ENCODE measurements at regions of chr6 and their contacts with region 1.

Region 1: GRCh38 chr6:35731736-35732532 is 4.9 kb upstream of the ARMC12 start:
- DNase-seq: peak; percentile 98
- ATAC-seq: peak; percentile 63
- H3K4me3 Mint-ChIP-seq: peak overlapping the region; percentile 85
- H3K27ac Mint-ChIP-seq: peak overlapping the region; percentile 99
- H3K4me1 Mint-ChIP-seq: peaks cover 77% of the 10 kb centered on the region
- H3K27me3 Mint-ChIP-seq: no peaks in the 10 kb centered on the region

Region 2: DNA sequence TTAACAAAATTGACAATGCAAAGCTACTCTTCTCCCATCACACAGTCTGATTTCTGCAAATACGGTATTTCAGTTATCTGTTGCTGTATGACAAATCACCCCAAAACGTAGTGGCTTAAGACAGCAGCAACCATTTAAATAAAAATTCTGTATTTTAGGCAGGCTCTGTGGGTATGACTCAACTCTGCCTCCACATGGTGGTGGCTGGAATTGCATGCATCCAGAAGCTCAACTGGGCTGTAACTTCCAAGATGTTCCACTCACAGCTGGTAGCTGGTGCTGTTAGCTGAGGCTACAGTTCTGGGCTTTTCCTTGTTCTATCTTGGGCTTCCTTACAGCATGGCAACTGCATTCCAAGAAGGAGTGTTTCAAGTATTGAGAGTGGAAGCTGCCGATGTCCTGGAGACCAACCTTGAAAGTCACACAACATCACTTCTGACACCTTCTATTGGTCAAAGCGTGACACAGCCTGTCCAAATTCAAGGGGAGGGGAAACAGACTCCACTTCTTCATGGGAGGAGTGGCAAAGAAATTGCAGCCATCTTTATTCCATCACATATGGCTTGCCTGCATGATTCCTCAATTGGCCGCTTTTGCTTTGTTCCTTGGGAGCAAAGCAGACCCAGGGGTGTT is 179.5 kb before region 1 on chr6:
- CTCF ChIA-PET with region 1: interaction called, 26 read pairs
- POLR2A ChIA-PET with region 1: no interaction called
- DNase-seq: peak; percentile 78
- ATAC-seq: peak; percentile 64
- H3K4me3 Mint-ChIP-seq: no peak overlapping the region
- H3K27ac Mint-ChIP-seq: no peak overlapping the region
- H3K4me1 Mint-ChIP-seq: peaks cover 8% of the 10 kb centered on the region
- H3K27me3 Mint-ChIP-seq: peaks cover 14% of the 10 kb centered on the region

Region 3: DNA sequence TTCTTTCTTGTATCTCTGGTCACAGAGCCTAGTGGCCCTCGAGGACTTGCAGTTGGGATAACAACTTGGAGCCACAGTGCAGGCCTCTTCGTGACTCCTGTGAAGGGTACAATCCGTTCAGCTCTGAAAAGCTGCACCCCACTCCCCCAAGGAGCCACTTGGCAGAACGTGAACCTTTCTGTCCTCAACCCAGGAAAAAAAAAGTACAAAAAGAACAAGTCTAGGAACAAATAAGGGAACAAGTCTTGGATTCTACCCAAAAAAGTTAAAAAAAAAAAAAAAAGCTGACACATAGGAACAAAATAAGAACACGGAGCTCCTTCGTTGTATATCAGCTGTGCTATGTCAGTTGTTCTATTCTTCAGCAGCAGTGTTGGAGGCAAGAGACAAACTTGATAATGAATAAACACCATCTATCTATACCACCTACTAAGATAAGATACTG is 141.3 kb before region 1 on chr6:
- CTCF ChIA-PET with region 1: interaction called, 259 read pairs
- POLR2A ChIA-PET with region 1: no interaction called
- DNase-seq: no peak
- ATAC-seq: no peak
- H3K4me3 Mint-ChIP-seq: no peak overlapping the region
- H3K27ac Mint-ChIP-seq: no peak overlapping the region
- H3K4me1 Mint-ChIP-seq: peaks cover 46% of the 10 kb centered on the region
- H3K27me3 Mint-ChIP-seq: no peaks in the 10 kb centered on the region

Region 4: GRCh38 chr6:35640017-35640664 is 91.8 kb before region 1 on chr6:
- CTCF ChIA-PET with region 1: interaction called, 49 read pairs
- POLR2A ChIA-PET with region 1: interaction called, 3 read pairs
- DNase-seq: no peak
- ATAC-seq: no peak
- H3K4me3 Mint-ChIP-seq: no peak overlapping the region
- H3K27ac Mint-ChIP-seq: no peak overlapping the region
- H3K4me1 Mint-ChIP-seq: peaks cover 48% of the 10 kb centered on the region
- H3K27me3 Mint-ChIP-seq: no peaks in the 10 kb centered on the region

Region 5: GRCh38 chr6:35663447-35664235 is 68.3 kb before region 1 on chr6:
- CTCF ChIA-PET with region 1: interaction called, 72 read pairs
- POLR2A ChIA-PET with region 1: interaction called, 10 read pairs
- DNase-seq: peak; percentile 37
- ATAC-seq: peak; percentile 61
- H3K4me3 Mint-ChIP-seq: no peak overlapping the region
- H3K27ac Mint-ChIP-seq: no peak overlapping the region
- H3K4me1 Mint-ChIP-seq: peaks cover 15% of the 10 kb centered on the region
- H3K27me3 Mint-ChIP-seq: no peaks in the 10 kb centered on the region

Region 6: DNA sequence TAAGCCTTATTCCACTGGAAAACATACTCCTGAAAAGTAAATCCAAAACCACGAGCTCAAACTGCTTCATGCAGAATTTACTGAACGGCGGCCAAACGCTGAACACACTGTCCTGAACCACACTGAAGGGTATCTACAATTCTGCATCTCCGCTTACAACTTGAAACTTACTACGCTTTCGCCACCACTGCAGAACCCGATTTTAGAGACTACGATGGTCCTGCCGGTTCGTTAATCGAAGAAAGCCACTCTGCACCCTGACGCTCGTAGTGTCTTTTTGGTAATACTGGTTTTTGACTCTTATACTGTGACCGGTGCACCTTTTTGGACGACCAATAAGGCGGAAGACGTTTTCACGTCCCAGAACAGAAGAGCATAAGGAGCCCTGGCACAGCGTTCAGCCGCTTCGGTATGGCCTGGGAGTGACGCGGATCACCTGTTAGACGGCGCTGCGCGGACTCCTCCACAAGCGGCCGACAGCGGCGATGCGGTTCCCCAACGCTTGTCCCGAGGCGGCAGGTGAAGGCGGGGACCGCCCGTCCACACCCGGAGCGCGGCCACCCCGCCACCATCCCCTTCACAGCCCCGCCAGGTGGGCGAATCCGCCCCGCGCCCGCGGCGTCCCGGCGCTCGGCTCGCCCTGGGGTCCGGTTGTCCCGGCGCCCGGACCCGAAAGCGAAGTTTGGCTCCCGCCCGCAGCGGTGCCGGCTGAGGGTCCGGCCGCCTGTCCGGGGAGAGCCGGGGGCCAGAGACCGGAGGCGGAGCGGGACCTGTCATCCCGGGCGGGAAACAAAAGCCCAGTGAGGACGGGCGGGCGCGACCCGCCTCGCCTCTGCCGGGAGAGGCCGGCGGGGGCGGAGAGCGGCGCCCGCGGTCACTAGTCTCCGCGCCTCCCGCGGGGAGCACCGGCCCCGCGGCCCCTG is 44.0 kb before region 1 on chr6:
- CTCF ChIA-PET with region 1: interaction called, 55 read pairs
- POLR2A ChIA-PET with region 1: interaction called, 8 read pairs
- DNase-seq: peak; percentile 74
- ATAC-seq: peak; percentile 54
- H3K4me3 Mint-ChIP-seq: peak overlapping the region; percentile 87
- H3K27ac Mint-ChIP-seq: peak overlapping the region; percentile 88
- H3K4me1 Mint-ChIP-seq: peaks cover 14% of the 10 kb centered on the region
- H3K27me3 Mint-ChIP-seq: no peaks in the 10 kb centered on the region

Region 7: DNA sequence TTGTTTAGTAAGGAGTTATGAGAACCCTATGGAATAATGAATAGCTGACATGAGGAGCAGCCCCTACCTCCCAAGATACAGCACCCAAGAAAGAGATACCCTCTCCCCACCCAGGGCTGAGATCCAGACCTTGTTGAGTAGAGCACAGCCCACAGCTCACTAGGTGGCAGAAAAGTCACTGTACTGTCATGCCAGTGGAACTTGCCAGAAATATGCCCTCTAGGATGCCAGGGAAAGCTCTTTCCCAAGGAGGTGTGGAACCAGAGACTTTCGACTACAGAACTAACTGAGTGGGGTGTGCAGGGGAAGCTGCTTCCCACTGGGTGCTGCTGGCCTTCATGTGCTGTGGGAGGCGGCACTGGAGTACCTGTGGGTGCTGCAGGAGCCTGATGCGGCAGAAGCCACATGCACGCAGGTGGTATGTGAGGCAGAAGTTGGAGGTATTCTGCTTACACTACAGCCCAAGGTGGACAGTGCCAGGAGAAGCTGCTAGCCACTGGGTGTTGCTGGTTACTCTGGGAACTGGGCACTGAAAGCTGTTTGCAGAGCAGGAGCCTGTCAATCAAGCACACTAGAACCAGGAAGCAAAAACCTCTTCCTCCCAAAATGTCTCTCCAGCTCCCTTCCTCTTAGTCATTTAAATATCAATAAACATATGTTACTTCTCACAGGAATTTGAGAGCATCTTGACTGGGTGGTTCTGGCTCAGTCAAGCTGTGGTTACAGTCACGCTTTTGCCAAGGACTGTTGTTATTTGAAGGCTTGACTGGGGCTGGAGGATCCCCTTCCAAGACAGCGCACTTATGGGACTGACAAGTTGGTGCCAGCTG is 22.7 kb after region 1 on chr6:
- CTCF ChIA-PET with region 1: interaction called, 10 read pairs
- POLR2A ChIA-PET with region 1: no interaction called
- DNase-seq: no peak
- ATAC-seq: no peak
- H3K4me3 Mint-ChIP-seq: no peak overlapping the region
- H3K27ac Mint-ChIP-seq: peak overlapping the region; percentile 36
- H3K4me1 Mint-ChIP-seq: peaks cover 12% of the 10 kb centered on the region
- H3K27me3 Mint-ChIP-seq: peaks cover 9% of the 10 kb centered on the region

Region 8: DNA sequence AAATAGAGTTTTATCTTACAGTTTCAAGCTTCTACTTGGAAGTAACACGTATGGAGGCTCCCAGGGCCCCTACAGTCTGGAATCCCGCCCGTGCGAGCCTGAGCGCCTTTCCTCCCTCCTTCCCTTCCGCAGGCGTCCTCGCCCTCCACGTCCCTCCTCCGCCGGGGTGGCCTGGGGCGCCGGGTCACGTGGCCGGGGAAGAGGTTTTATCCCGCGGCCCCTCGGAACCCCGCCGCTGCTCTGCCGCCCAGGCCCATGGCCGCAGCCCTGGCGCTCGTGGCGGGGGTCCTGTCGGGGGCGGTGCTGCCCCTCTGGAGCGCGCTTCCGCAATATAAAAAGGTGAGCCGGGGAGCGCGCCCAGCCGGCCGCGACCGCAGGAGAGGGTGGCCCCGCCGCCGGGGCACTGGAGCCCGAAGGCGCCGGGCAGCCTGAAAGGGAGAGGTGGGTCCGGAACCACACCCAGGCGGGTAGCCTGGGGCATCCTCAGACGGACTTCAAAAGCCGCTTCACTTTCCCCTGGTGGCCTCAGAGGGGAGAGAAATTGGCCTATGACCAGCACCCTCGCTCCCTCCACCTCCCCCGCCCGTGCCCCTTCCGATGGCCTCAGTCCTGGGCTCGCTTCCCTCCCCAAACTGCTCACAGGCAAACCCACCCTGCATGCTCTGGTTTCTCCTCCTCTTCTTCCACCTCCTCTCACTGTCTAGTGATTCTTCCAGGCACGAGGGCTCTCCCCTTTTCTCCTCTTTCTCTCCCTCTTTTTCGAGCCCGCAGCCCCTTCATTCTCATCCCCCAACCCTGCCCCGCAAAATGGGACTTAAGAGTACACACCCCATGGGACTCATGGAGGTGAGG is 44.7 kb after region 1 on chr6 and contains the start of gene CLPSL2:
- CTCF ChIA-PET with region 1: no interaction called
- POLR2A ChIA-PET with region 1: no interaction called
- DNase-seq: no peak
- ATAC-seq: peak; percentile 57
- H3K4me3 Mint-ChIP-seq: peak within 1 kb of the TSS; percentile 22
- H3K27ac Mint-ChIP-seq: no peak within 1 kb of the TSS
- H3K4me1 Mint-ChIP-seq: no peaks in the 10 kb centered on the region
- H3K27me3 Mint-ChIP-seq: peaks cover 36% of the 10 kb centered on the region
- total RNA-seq, gene CLPSL2: not detected